ENCODE measurements at regions of chr2 and their contacts with region 1.

Region 1: DNA sequence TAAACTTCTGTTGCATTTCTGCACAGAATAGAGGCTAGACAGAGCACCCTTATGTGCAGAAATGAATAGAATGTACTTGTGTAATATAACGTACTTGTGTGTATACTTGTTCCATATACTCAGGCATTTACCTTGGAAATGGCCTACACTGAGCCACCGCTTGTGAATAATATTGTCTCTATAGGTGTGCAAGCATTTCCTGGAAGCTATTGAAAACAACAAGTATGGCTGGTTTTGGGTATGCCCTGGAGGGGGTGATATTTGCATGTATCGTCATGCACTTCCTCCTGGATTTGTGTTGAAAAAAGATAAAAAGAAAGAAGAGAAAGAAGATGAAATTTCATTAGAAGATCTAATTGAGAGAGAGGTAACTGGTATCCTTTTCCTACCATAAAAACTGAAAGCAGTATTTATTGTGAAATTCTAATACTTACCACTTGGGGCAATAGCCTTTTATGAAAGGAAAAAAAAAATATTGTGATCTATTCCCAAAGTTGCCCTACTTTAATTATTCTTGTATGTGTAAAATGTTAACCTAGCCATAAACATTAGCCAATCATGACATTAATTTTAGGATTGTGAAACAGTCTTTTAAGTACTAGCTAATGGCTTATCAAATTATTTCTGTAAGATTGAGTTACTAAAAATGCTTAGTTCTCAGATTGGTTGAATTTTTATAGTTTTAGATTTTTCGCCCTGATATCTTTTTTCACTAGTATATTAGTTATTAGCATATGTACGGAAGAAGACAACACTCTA is 18.0 kb downstream of the ZC3H15 start:
- DNase-seq: no peak
- ATAC-seq: peak in 3 of 4 donors; percentile 72 to 80 (median 80)
- H3K4me3 ChIP-seq: no peak overlapping the region
- H3K27ac ChIP-seq: no peak overlapping the region
- H3K4me1 ChIP-seq: peaks cover 0 to 3% (median 0%) of the 10 kb centered on the region in 3 donors
- H3K27me3 ChIP-seq: no peaks in the 10 kb centered on the region
- CTCF ChIP-seq: peak in 3 of 4 donors; percentile 37 to 52 (median 44)

Region 2: DNA sequence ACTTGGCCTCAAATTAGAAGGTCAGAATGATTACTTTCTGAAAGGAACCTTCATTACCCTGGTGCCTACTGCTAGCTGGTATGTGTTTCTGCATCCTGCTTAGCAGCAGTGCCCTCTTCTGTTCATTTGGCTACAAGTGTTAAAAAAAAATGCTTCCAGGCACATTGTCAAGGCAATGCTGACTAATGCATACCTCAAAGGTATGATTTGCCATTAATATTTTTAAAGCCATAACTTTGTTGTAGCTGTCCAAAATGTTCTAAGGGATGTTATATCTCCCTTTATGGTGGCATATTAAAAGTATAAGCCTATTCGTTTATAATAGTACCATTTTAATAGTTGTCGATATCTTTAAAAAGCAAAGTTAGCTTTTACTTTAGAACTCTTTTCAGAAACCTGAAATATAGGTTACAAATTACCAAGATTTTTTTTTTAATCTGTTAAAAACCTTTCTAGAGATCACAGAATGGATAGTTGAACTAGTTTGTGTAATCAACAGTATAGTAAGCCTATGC is 137.8 kb after region 1 on chr2:
- intact Hi-C with region 1: loop called (anchors 5 to 10 kb)
- DNase-seq: peak in 3 of 6 donors; percentile 32 to 55 (median 35)
- ATAC-seq: peak; percentile 94 to 99 (median 97)
- H3K4me3 ChIP-seq: no peak overlapping the region
- H3K27ac ChIP-seq: no peak overlapping the region
- H3K4me1 ChIP-seq: no peaks in the 10 kb centered on the region
- H3K27me3 ChIP-seq: no peaks in the 10 kb centered on the region
- CTCF ChIP-seq: peak in 3 of 4 donors; percentile 38 to 53 (median 51)

Region 3: GRCh38 chr2:186648130-186648529 is 144.1 kb after region 1 on chr2:
- intact Hi-C with region 1: loop called (anchors 5 to 10 kb)
- DNase-seq: no peak
- ATAC-seq: no peak
- H3K4me3 ChIP-seq: no peak overlapping the region
- H3K27ac ChIP-seq: no peak overlapping the region
- H3K4me1 ChIP-seq: peaks cover 0 to 3% (median 0%) of the 10 kb centered on the region in 3 donors
- H3K27me3 ChIP-seq: no peaks in the 10 kb centered on the region
- CTCF ChIP-seq: no peak

Measured in pancreas (tissue), 10 donors.